Activated T-helper 2 cell treated with anti-CD3 and anti-CD28 coated beads, Interferon-gamma antibody, Interleukin-2, Interleukin-4, amounts not matched to agents 10 μg/mL and 5 μg/mL and 100 μg/mL, durations not matched to agents 14 hours and 24 hours and 36 hours (primary cell): ENCODE measurements at regions of chr9 and their contacts with region 1.

Region 1: GRCh38 chr9:5089737-5090136 is 95.7 kb downstream of the INSL6 start:
- DNase-seq: no peak
- H3K4me3 Mint-ChIP-seq: no peak overlapping the region
- H3K27ac Mint-ChIP-seq: no peak overlapping the region
- H3K4me1 Mint-ChIP-seq: no peaks in the 10 kb centered on the region
- H3K27me3 Mint-ChIP-seq: no peaks in the 10 kb centered on the region

Region 2: GRCh38 chr9:5608298-5609225 is 518.8 kb after region 1 on chr9:
- intact Hi-C with region 1: loop called (anchors 10 kb)
- DNase-seq: no peak
- H3K4me3 Mint-ChIP-seq: peak overlapping the region; percentile 59
- H3K27ac Mint-ChIP-seq: peak overlapping the region; percentile 23
- H3K4me1 Mint-ChIP-seq: peaks cover 16% of the 10 kb centered on the region
- H3K27me3 Mint-ChIP-seq: no peaks in the 10 kb centered on the region